ENCODE measurements at regions of chr4 and their contacts with region 1.

Region 1: GRCh38 chr4:128517739-128518510 is 230.3 kb upstream of the PGRMC2 start:
- DNase-seq: peak; percentile 95
- H3K4me3 ChIP-seq: no peak overlapping the region
- H3K27ac ChIP-seq: peak overlapping the region; percentile 92
- H3K27me3 ChIP-seq: no peaks in the 10 kb centered on the region
- CTCF ChIP-seq: no peak

Region 2: DNA sequence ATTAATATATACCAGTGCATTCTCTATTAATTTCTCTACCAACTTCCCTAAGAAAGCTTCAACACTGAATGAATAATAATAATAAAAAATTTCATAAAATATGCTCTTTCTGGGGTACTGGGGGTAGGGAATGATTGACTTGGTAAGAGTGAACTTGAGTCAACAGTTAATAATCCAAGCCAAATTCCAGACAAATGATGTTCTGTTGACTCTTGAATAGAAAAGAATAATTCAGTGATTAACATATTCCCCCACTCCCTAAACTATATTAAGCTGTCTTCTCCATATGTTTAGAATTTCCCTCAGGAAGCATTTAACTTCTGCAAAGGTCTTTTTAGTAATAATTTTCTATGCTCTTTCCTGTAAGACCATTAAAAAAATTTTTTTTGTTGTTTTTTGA is 242.6 kb before region 1 on chr4:
- CTCF ChIA-PET with region 1: no interaction called
- POLR2A ChIA-PET with region 1: no interaction called
- DNase-seq: no peak
- H3K4me3 ChIP-seq: no peak overlapping the region
- H3K27ac ChIP-seq: no peak overlapping the region
- H3K27me3 ChIP-seq: no peaks in the 10 kb centered on the region
- CTCF ChIP-seq: no peak

Region 3: DNA sequence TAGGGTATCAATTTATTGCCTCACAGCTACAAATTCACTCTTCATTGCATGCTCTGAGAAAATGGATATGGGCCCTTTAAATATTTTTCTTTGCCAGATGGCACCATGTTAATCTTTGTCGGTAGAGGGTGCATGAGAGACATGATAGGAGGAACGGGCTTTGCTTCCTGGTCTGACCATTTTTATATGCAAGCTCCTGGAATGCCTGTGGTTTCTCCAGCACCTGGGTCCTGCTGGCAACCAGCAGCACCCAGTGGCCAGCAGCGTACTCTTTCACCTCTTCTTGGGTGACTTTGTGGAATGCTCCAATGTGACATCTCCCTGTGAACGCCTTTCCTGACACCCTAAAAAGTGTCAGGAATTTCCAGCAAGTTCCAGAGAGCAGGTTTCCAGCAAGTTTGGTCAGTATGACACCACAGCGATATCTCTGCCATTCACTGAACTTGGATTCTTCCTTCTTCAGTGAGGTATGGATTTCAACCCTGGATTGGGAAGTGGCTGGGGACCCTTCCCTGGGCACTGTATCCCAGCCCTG is 90.0 kb before region 1 on chr4:
- CTCF ChIA-PET with region 1: no interaction called
- POLR2A ChIA-PET with region 1: interaction called, 11 read pairs
- DNase-seq: peak; percentile 50
- H3K4me3 ChIP-seq: no peak overlapping the region
- H3K27ac ChIP-seq: no peak overlapping the region
- H3K27me3 ChIP-seq: no peaks in the 10 kb centered on the region
- CTCF ChIP-seq: peak; percentile 61

Region 4: GRCh38 chr4:128528793-128529553 is 11.0 kb after region 1 on chr4:
- CTCF ChIA-PET with region 1: interaction called, 3 read pairs
- POLR2A ChIA-PET with region 1: interaction called, 18 read pairs
- DNase-seq: peak; percentile 91
- H3K4me3 ChIP-seq: no peak overlapping the region
- H3K27ac ChIP-seq: peak overlapping the region; percentile 88
- H3K27me3 ChIP-seq: no peaks in the 10 kb centered on the region
- CTCF ChIP-seq: no peak

Region 5: GRCh38 chr4:128542041-128542440 is 24.1 kb after region 1 on chr4:
- CTCF ChIA-PET with region 1: no interaction called
- POLR2A ChIA-PET with region 1: no interaction called
- DNase-seq: no peak
- H3K4me3 ChIP-seq: no peak overlapping the region
- H3K27ac ChIP-seq: no peak overlapping the region
- H3K27me3 ChIP-seq: no peaks in the 10 kb centered on the region
- CTCF ChIP-seq: no peak

Region 6: DNA sequence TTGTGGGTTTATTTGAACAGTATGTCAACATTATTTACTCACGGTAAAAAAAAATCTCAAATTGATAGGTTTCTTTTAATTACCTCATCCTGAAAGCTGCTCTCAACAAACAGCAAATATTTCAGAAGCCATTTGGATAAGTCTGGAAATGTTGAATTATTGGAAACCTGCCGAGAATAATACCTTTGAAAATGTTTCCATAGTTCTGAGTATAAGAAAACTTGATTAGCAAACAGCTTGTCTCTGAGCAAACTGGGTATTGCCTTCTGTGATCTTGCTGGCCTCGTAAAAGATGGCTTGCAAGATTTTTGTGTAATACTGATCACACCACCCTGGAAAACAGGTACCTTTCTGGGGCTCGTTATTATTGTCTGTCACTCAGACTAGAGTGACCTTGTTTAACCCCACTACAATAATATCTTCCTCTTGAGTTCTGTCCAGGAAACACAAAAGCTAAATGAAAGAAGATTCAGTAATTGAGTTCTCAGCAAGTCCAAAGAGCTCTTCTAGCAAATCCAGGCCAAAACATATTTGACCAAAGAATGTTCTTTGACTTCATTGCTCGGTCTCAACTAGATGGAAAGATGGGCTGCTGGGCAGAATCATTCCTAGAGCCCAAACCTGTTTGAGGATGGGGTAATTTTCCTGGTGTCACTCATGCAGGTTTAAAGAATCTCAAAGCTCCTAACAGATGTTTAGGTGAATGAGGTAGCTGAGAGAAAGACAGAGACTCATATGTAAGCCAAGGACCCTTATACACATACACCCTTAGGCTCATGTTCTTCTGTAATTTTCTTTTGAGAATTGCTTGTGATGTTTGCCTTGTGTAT is 36.0 kb after region 1 on chr4:
- CTCF ChIA-PET with region 1: interaction called, 3 read pairs
- POLR2A ChIA-PET with region 1: interaction called, 19 read pairs
- DNase-seq: no peak
- H3K4me3 ChIP-seq: peak overlapping the region; percentile 70
- H3K27ac ChIP-seq: peak overlapping the region; percentile 47
- H3K27me3 ChIP-seq: no peaks in the 10 kb centered on the region
- CTCF ChIP-seq: no peak

Region 7: DNA sequence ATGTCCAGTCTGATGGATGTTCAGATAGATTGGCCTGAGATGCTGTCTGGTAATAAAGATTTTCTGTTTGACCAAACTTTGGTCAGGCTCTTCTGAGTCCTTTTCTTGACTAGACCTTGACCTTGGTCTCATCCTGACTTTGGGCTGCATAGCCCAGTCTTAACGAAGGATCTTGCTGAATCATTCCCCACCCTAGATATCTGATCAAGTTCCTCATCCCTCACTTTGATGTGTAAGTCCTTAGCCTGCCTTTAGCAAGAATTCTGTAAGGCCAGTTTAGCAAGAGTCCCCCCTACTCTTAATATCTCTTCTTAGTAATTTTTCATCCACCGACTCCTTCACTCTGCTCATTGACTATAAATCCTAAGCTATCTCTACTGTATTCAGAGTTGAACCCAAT is 47.1 kb after region 1 on chr4:
- CTCF ChIA-PET with region 1: no interaction called
- POLR2A ChIA-PET with region 1: interaction called, 10 read pairs
- DNase-seq: no peak
- H3K4me3 ChIP-seq: no peak overlapping the region
- H3K27ac ChIP-seq: no peak overlapping the region
- H3K27me3 ChIP-seq: no peaks in the 10 kb centered on the region
- CTCF ChIP-seq: no peak

Region 8: DNA sequence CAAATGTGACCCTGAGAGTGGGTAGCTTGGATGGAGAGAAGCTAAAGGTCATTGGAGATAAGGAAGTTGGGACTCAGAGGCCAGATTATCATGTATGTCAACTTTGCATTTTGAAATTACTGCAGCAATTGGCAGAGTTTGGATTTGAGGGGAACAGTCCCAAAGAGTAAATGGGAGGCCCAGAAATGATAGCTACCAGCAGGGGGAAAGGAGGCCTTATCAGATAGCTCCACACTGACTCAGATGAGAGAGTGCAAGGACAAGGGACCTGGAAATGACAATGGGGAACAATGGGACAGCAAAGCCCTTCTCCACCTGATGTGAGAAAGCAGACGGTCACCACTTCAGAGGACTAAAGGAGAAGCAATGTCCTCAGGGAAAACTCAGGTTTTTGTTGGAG is 90.1 kb after region 1 on chr4:
- CTCF ChIA-PET with region 1: no interaction called
- POLR2A ChIA-PET with region 1: no interaction called
- DNase-seq: no peak
- H3K4me3 ChIP-seq: no peak overlapping the region
- H3K27ac ChIP-seq: no peak overlapping the region
- H3K27me3 ChIP-seq: no peaks in the 10 kb centered on the region
- CTCF ChIP-seq: no peak

Measured in AG04450 (cell line).